ENCODE measurements at regions of chr3 and their contacts with region 1.

Region 1: GRCh38 chr3:56988458-56989168 is 71.9 kb upstream of the SPATA12 start:
- DNase-seq: peak; percentile 79
- ATAC-seq: peak; percentile 57
- H3K4me3 Mint-ChIP-seq: no peak overlapping the region
- H3K27ac Mint-ChIP-seq: no peak overlapping the region
- H3K4me1 Mint-ChIP-seq: peaks cover 33% of the 10 kb centered on the region
- H3K27me3 Mint-ChIP-seq: peaks cover 7% of the 10 kb centered on the region
- CTCF ChIP-seq: peak; percentile 99

Region 2: GRCh38 chr3:56664823-56665222 is 323.8 kb before region 1 on chr3:
- CTCF ChIA-PET with region 1: interaction called, 11 read pairs
- POLR2A ChIA-PET with region 1: no interaction called
- intact Hi-C with region 1: no loop called
- DNase-seq: no peak
- ATAC-seq: no peak
- H3K4me3 Mint-ChIP-seq: no peak overlapping the region
- H3K27ac Mint-ChIP-seq: peak overlapping the region; percentile 8
- H3K4me1 Mint-ChIP-seq: peaks cover 27% of the 10 kb centered on the region
- H3K27me3 Mint-ChIP-seq: no peaks in the 10 kb centered on the region
- CTCF ChIP-seq: no peak

Region 3: DNA sequence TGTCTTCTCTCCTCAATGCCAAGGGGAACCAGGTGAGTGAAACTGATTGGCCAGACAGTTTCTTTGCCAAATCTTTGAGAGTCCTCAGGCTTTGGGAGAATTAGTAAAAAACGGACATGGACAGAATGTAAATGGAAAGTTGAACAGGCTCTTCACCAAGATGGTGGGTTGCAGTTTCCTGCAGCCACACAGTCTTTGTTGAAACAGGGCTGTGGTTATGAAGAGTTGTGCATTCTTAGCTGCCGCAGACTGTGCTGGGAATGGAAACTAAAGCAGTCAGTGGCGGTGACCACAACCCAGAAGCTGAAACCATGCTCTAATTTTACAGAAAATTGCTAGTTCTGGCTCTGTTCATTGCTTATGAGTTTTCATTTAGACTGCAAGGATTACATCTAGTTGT is 263.4 kb before region 1 on chr3:
- CTCF ChIA-PET with region 1: interaction called, 14 read pairs
- POLR2A ChIA-PET with region 1: no interaction called
- intact Hi-C with region 1: no loop called
- DNase-seq: peak; percentile 89
- ATAC-seq: peak; percentile 89
- H3K4me3 Mint-ChIP-seq: peak overlapping the region; percentile 63
- H3K27ac Mint-ChIP-seq: peak overlapping the region; percentile 95
- H3K4me1 Mint-ChIP-seq: peaks cover 58% of the 10 kb centered on the region
- H3K27me3 Mint-ChIP-seq: no peaks in the 10 kb centered on the region
- CTCF ChIP-seq: no peak

Region 4: GRCh38 chr3:56783644-56784447 is 204.8 kb before region 1 on chr3:
- CTCF ChIA-PET with region 1: interaction called, 10 read pairs
- POLR2A ChIA-PET with region 1: no interaction called
- intact Hi-C with region 1: no loop called
- DNase-seq: peak; percentile 90
- ATAC-seq: peak; percentile 82
- H3K4me3 Mint-ChIP-seq: peak overlapping the region; percentile 70
- H3K27ac Mint-ChIP-seq: peak overlapping the region; percentile 92
- H3K4me1 Mint-ChIP-seq: peaks cover 95% of the 10 kb centered on the region
- H3K27me3 Mint-ChIP-seq: no peaks in the 10 kb centered on the region
- CTCF ChIP-seq: no peak

Region 5: DNA sequence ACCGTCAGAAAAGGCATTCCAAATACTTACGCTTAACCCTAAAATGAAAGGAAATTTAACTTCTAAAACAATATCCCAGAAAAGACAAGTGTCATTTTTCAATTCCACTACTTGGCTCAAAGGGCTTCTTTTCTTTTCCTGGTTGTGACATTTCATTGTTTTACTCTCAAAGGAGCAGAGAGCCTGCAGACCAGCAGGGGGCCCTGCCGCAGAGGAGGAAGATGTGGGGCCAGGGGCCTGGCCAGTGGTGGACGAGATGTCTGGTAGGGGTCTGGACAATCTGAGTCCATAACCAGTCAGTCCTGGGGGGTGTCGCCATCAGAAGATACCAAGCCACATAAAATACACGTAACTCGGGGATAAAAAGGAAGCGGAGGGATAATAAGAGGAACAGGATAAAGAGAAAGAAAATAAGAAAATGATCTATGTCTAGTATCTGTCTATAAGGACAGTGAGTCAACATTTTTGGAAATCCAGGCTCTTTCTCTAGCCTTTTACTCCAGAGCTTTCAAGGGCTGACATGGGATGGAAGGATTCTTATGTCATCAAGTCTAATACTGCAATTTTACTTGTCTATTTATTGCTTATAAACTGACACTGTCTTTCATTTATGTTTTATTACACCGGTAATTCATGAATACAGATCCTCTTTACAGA is 132.6 kb before region 1 on chr3:
- CTCF ChIA-PET with region 1: interaction called, 23 read pairs
- POLR2A ChIA-PET with region 1: no interaction called
- intact Hi-C with region 1: loop called (anchors 5 kb)
- DNase-seq: peak; percentile 60
- ATAC-seq: peak; percentile 74
- H3K4me3 Mint-ChIP-seq: no peak overlapping the region
- H3K27ac Mint-ChIP-seq: peak overlapping the region; percentile 62
- H3K4me1 Mint-ChIP-seq: peaks cover 53% of the 10 kb centered on the region
- H3K27me3 Mint-ChIP-seq: no peaks in the 10 kb centered on the region
- CTCF ChIP-seq: peak; percentile 76

Region 6: GRCh38 chr3:56915966-56916586 is 72.5 kb before region 1 on chr3:
- CTCF ChIA-PET with region 1: interaction called, 43 read pairs
- POLR2A ChIA-PET with region 1: interaction called, 5 read pairs
- intact Hi-C with region 1: no loop called
- DNase-seq: peak; percentile 90
- ATAC-seq: peak; percentile 86
- H3K4me3 Mint-ChIP-seq: peak overlapping the region; percentile 82
- H3K27ac Mint-ChIP-seq: peak overlapping the region; percentile 91
- H3K4me1 Mint-ChIP-seq: peaks cover 65% of the 10 kb centered on the region
- H3K27me3 Mint-ChIP-seq: no peaks in the 10 kb centered on the region
- CTCF ChIP-seq: no peak

Measured in activated CD8-positive, alpha-beta T cell treated with anti-CD3 and anti-CD28 coated beads for 36 hours (primary cell).